Naive thymus-derived CD4-positive, alpha-beta T cell (primary cell): ENCODE measurements at regions of chr4 and their contacts with region 1.

Region 1: GRCh38 chr4:182917182-182918043 is at the start of gene DCTD:
- DNase-seq: peak; percentile 71 to 90 (median 80)
- ATAC-seq: peak; percentile 89
- H3K4me3 ChIP-seq: peak within 1 kb of the TSS; percentile 77
- H3K4me3 Mint-ChIP-seq: peak within 1 kb of the TSS; percentile 75 to 95 (median 90)
- H3K27ac ChIP-seq: peak within 1 kb of the TSS; percentile 89
- H3K27ac Mint-ChIP-seq: peak within 1 kb of the TSS; percentile 86 to 98 (median 92)
- H3K4me1 ChIP-seq: peaks cover 20 to 26% of the 10 kb centered on the region in 2 donors
- H3K4me1 Mint-ChIP-seq: peaks cover 17 to 58% (median 50%) of the 10 kb centered on the region in 7 donors
- H3K27me3 ChIP-seq: no peaks in the 10 kb centered on the region
- H3K27me3 Mint-ChIP-seq: peaks cover 0 to 6% (median 0%) of the 10 kb centered on the region in 5 donors
- total RNA-seq, gene DCTD: 61.4 to 76.2 (median 68.9) TPM

Region 2: GRCh38 chr4:182938205-182938645 is 20.8 kb after region 1 on chr4:
- CTCF ChIA-PET with region 1: interaction called, 4 read pairs
- POLR2A ChIA-PET with region 1: no interaction called
- intact Hi-C with region 1: loop called in 1 of 2 experiments (anchors 1 kb)
- DNase-seq: peak; percentile 26 to 76 (median 48)
- ATAC-seq: peak; percentile 96
- H3K4me3 ChIP-seq: no peak overlapping the region
- H3K4me3 Mint-ChIP-seq: peak overlapping the region in 1 of 10 donors; percentile 21
- H3K27ac ChIP-seq: no peak overlapping the region
- H3K27ac Mint-ChIP-seq: no peak overlapping the region
- H3K4me1 ChIP-seq: no peaks in the 10 kb centered on the region
- H3K4me1 Mint-ChIP-seq: peaks cover 0 to 4% (median 0%) of the 10 kb centered on the region in 7 donors
- H3K27me3 ChIP-seq: no peaks in the 10 kb centered on the region
- H3K27me3 Mint-ChIP-seq: peaks cover 12 to 27% (median 15%) of the 10 kb centered on the region in 5 donors

Region 3: DNA sequence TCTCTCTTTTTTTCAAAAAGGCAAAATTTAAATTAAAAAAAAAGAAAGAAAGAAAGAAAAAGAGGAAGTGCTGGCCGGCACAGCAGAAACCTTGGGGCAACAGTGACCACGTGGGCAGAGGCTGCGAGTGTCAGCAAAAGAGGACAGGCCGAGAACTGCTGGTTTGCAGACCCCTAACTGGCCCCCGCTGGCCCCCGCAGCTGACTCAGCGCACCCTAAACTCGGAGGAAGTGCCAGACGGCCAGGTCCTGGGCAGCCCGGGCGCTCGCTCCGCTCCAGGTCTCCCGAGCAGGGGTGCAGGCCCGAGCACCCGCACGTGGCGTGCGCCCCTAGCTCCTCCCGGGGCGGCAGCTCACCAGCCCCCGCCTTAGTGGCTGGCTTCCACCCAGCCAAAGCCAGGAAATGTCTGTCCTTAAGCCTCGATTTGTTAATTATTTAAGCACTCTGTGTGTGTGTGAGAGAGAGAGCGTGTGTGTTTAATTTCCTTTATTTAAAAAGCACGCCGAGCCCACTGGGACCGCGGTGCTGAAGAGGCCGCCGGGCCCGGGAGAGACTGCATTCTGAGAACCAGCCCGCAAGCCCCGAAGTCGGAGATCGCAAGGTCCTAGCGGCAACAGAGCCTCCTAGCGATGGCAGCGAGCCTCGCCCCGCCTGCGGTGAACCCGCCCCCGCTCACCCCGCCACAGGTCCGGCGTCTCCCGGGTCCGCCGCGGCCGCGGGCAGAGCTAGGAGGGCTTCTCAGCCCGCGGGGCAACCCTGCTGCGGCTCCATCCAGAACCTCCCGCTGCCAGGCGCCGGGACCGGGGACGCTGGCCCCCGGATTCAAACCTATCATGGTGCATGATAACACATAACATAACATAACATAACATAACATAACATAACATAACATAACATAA is 481.1 kb after region 1 on chr4:
- CTCF ChIA-PET with region 1: no interaction called
- POLR2A ChIA-PET with region 1: no interaction called
- intact Hi-C with region 1: loop called in 1 of 2 experiments (anchors 2 kb)
- DNase-seq: peak; percentile 32 to 70 (median 57)
- ATAC-seq: peak; percentile 88
- H3K4me3 ChIP-seq: peak overlapping the region; percentile 76
- H3K4me3 Mint-ChIP-seq: peak overlapping the region; percentile 86 to 93 (median 90)
- H3K27ac ChIP-seq: peak overlapping the region; percentile 34
- H3K27ac Mint-ChIP-seq: peak overlapping the region; percentile 65 to 95 (median 82)
- H3K4me1 ChIP-seq: peaks cover 0 to 6% of the 10 kb centered on the region in 2 donors
- H3K4me1 Mint-ChIP-seq: peaks cover 17 to 34% (median 28%) of the 10 kb centered on the region in 7 donors
- H3K27me3 ChIP-seq: no peaks in the 10 kb centered on the region
- H3K27me3 Mint-ChIP-seq: peaks cover 0 to 45% (median 0%) of the 10 kb centered on the region in 5 donors

Region 4: GRCh38 chr4:183659029-183659871 is 741.8 kb after region 1 on chr4 and contains the starts of genes RWDD4 and TRAPPC11:
- CTCF ChIA-PET with region 1: no interaction called
- POLR2A ChIA-PET with region 1: no interaction called
- intact Hi-C with region 1: loop called (anchors 1 to 5 kb)
- DNase-seq: peak; percentile 83 to 97 (median 95)
- ATAC-seq: peak; percentile 99
- H3K4me3 ChIP-seq: peak within 1 kb of the TSS; percentile 87
- H3K4me3 Mint-ChIP-seq: peak within 1 kb of the TSS; percentile 91 to 98 (median 96)
- H3K27ac ChIP-seq: peak within 1 kb of the TSS; percentile 96
- H3K27ac Mint-ChIP-seq: peak within 1 kb of the TSS; percentile 90 to 99 (median 95)
- H3K4me1 ChIP-seq: peaks cover 14 to 19% of the 10 kb centered on the region in 2 donors
- H3K4me1 Mint-ChIP-seq: peaks cover 35 to 48% (median 38%) of the 10 kb centered on the region in 7 donors
- H3K27me3 ChIP-seq: no peaks in the 10 kb centered on the region
- H3K27me3 Mint-ChIP-seq: no peaks in the 10 kb centered on the region
- total RNA-seq, gene RWDD4: 9.3 to 15.8 (median 11.6) TPM
- total RNA-seq, gene TRAPPC11: 26.3 to 48.8 (median 35.6) TPM

Region 5: DNA sequence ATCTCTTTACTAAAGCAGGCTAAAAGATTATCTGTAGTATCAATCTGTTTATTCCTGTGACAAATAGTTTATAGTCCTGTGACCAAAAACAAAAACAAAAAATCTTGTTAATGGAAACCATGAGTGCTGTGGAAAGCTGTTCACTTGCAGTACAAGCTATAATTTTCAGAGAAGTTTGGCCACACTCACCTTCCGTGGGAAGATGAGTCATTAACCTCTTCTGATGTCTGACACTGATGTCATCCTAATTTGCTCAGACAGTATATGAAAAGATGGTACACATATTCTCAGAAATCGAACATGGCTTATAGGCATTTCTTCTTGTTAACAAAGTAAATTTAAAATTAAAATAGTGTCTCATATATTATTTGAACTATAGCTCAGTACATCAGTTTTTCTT is 1320.2 kb after region 1 on chr4:
- CTCF ChIA-PET with region 1: no interaction called
- POLR2A ChIA-PET with region 1: no interaction called
- intact Hi-C with region 1: loop called in 1 of 2 experiments (anchors 5 kb)
- DNase-seq: peak in 1 of 9 donors; percentile 31
- ATAC-seq: peak; percentile 45
- H3K4me3 ChIP-seq: no peak overlapping the region
- H3K4me3 Mint-ChIP-seq: peak overlapping the region in 1 of 10 donors; percentile 80
- H3K27ac ChIP-seq: no peak overlapping the region
- H3K27ac Mint-ChIP-seq: peak overlapping the region in 4 of 9 donors; percentile 19 to 93 (median 27)
- H3K4me1 ChIP-seq: no peaks in the 10 kb centered on the region
- H3K4me1 Mint-ChIP-seq: peaks cover 0 to 51% (median 8%) of the 10 kb centered on the region in 7 donors
- H3K27me3 ChIP-seq: no peaks in the 10 kb centered on the region
- H3K27me3 Mint-ChIP-seq: no peaks in the 10 kb centered on the region